ENCODE measurements at regions of chr17 and their contacts with region 1.

Region 1: GRCh38 chr17:7060165-7060891 is 16.4 kb upstream of the SLC16A11 start:
- DNase-seq: peak; percentile 27
- H3K4me3 ChIP-seq: no peak overlapping the region
- H3K27ac ChIP-seq: no peak overlapping the region
- H3K4me1 ChIP-seq: no peaks in the 10 kb centered on the region
- H3K27me3 ChIP-seq: no peaks in the 10 kb centered on the region
- CTCF ChIP-seq: no peak

Region 2: DNA sequence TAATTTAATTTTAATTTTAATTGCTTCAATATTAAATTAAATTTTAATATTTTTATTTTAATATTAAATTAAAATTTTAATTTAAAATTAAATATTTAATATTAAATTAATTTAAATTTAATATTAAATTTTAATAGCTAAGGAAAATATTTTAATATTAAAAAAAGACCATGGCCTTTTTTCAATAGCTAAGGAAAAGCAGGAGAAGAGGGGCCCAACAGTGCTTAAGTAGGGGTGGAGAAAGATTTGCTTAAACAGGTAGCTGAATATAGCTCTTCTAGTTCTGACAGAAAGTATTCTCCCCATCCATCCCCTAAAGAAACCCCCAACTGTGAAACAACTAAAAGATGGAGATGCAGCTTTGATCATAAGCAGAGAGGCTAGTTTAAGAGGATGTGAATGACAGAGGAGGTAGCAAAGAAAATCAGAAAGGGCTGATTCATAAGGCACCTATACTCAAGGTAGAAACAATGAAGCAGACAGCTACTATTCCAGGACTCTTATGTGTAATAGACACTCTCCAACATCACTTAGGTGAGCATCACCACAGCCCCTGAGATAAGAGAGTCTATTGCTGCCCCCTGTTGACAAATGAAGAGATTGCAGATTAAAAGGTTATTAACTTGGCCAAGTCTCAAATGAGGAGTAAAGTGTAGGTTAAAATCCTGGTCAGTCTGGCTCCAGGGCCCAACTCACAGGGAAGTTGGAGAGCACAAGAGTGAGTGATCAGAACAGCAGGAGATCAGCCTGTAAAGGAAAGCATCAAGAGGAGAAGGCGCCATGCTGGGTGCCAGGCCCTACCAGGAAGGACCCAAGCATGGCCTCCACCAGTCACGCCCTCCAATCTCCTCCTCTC is 55.7 kb before region 1 on chr17:
- CTCF ChIA-PET with region 1: no interaction called
- POLR2A ChIA-PET with region 1: no interaction called
- intact Hi-C with region 1: no loop called
- DNase-seq: peak; percentile 87
- H3K4me3 ChIP-seq: no peak overlapping the region
- H3K27ac ChIP-seq: no peak overlapping the region
- H3K4me1 ChIP-seq: no peaks in the 10 kb centered on the region
- H3K27me3 ChIP-seq: no peaks in the 10 kb centered on the region
- CTCF ChIP-seq: peak; percentile 87

Region 3: DNA sequence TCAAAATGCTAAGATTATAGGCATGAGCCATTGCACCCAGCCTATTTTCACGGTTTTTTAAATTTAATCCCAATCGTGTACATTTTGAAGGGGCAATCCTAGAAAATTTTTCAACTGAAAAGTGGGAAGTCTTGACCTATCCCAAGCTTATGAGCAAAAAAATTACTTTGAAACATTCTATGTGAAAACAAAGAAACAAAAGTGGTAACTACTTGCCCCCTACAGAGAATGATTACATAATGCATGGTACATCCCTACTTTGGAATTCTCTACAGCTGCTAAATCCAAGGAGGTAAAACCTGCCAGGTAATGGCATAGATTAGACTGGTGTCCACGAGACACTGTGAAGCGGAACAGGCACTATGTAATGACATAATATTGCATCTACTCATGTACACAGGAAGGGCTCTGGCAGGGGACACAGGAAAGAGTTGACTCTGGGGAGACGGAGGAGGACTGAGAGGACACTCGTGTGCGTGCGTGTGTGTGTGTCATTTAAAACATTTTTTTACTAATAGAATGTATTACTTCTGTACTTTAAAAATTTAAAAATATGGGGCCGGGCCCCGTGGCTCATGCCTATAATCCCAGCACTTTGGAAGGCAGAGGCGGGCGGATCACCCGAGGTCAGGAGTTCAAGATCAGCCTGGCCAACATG is 38.6 kb after region 1 on chr17:
- CTCF ChIA-PET with region 1: no interaction called
- POLR2A ChIA-PET with region 1: interaction called, 16 read pairs
- intact Hi-C with region 1: no loop called
- DNase-seq: no peak
- H3K4me3 ChIP-seq: no peak overlapping the region
- H3K27ac ChIP-seq: no peak overlapping the region
- H3K4me1 ChIP-seq: peaks cover 9% of the 10 kb centered on the region
- H3K27me3 ChIP-seq: no peaks in the 10 kb centered on the region
- CTCF ChIP-seq: no peak